ENCODE measurements at regions of chr7 and their contacts with region 1.

Region 1: GRCh38 chr7:90155206-90155605 is 937 bp downstream of the STEAP1 start:
- DNase-seq: no peak
- ATAC-seq: no peak
- H3K4me3 Mint-ChIP-seq: no peak overlapping the region
- H3K27ac Mint-ChIP-seq: no peak overlapping the region
- H3K4me1 Mint-ChIP-seq: peaks cover 3% of the 10 kb centered on the region
- H3K27me3 Mint-ChIP-seq: peaks cover 26% of the 10 kb centered on the region
- CTCF ChIP-seq: no peak

Region 2: DNA sequence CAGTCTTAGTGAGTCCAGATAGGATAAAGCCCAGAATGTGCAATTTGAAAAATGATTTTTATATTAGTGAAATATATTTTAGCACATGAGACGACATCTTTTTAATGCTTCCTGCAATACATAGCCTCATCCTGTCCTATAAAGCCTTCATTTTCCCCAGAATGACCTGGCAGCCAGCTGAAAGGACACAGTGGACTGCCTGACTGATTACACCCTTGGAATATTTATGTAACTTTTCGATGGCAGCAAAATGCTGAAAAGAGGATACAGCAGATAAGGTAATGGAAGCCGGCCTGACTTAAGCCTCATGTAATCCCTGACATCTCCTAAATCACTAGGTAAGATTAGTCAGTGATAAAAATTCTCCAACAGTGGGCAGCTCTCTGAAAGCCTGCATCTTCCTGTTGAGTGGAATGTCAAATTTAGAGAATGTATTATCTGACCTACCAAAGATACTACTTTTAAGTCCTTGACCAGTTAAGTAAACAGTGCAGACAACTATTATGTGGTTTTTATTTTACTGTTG is 211.6 kb before region 1 on chr7:
- CTCF ChIA-PET with region 1: no interaction called
- POLR2A ChIA-PET with region 1: no interaction called
- intact Hi-C with region 1: no loop called
- DNase-seq: no peak
- ATAC-seq: no peak
- H3K4me3 Mint-ChIP-seq: no peak overlapping the region
- H3K27ac Mint-ChIP-seq: no peak overlapping the region
- H3K4me1 Mint-ChIP-seq: no peaks in the 10 kb centered on the region
- H3K27me3 Mint-ChIP-seq: no peaks in the 10 kb centered on the region
- CTCF ChIP-seq: no peak

Region 3: DNA sequence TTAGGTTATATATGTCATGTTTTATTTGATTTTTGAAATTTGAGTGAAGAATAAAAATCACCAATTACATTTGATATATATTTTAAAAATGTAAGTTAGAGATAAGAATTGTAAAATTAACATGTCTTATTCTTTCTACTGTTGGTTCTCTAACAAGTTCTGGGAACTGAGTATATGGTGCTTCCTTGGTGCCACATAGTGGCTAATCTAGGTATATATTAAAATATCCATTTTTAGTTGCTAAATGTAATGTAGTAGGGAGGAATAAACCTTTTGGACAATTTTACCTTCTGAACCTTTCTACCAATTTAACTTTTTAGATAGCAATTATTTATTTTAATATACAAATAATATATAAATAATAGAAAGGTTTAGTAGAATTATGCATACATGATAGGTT is 107.2 kb after region 1 on chr7:
- CTCF ChIA-PET with region 1: interaction called, 10 read pairs
- POLR2A ChIA-PET with region 1: no interaction called
- intact Hi-C with region 1: loop called (anchors 5 kb)
- DNase-seq: no peak
- ATAC-seq: peak; percentile 69
- H3K4me3 Mint-ChIP-seq: no peak overlapping the region
- H3K27ac Mint-ChIP-seq: no peak overlapping the region
- H3K4me1 Mint-ChIP-seq: no peaks in the 10 kb centered on the region
- H3K27me3 Mint-ChIP-seq: peaks cover 9% of the 10 kb centered on the region
- CTCF ChIP-seq: peak; percentile 31

Region 4: GRCh38 chr7:90430614-90431471 is 275.6 kb after region 1 on chr7:
- CTCF ChIA-PET with region 1: interaction called, 19 read pairs
- POLR2A ChIA-PET with region 1: no interaction called
- intact Hi-C with region 1: loop called (anchors 1 kb)
- DNase-seq: no peak
- ATAC-seq: no peak
- H3K4me3 Mint-ChIP-seq: no peak overlapping the region
- H3K27ac Mint-ChIP-seq: no peak overlapping the region
- H3K4me1 Mint-ChIP-seq: peaks cover 1% of the 10 kb centered on the region
- H3K27me3 Mint-ChIP-seq: peaks cover 14% of the 10 kb centered on the region
- CTCF ChIP-seq: no peak

Measured in activated CD8-positive, alpha-beta T cell treated with anti-CD3 and anti-CD28 coated beads for 36 hours (primary cell).